ENCODE measurements at regions of chr12 and their contacts with region 1.

Region 1: GRCh38 chr12:52884526-52885293 is 20.2 kb downstream of the KRT8 start:
- DNase-seq: no peak
- H3K4me3 ChIP-seq: no peak overlapping the region
- H3K27ac ChIP-seq: no peak overlapping the region
- H3K27me3 ChIP-seq: no peaks in the 10 kb centered on the region
- CTCF ChIP-seq: peak; percentile 96

Region 2: DNA sequence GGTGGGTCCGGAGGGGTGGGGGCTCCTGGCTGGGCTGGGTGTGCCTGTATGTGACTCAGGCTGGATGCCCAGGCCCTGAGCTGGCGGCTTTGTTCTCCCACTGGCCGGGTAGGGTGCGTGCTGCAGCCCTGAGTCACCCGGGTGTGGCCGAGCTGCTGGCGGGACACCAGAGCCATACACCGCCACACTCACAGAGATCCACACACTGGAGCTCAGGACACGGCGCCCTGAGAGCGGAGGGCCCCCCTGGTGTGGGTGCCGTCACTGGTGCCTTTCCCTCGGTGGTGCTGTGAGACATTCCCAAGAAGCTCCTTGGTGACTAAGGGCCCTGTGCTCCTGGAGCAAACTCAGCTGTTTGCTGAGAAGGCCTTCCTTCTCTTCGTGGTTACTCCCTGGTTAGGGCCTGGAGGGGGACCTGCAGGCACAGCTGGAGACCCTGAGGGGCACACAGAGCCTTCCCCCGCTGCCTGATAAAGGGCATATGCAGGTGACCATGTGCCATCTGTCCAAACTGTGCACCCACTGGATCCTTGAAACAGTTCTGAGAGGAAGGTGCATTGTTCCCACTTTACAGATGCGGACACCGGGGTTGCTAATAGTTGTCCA is 737.2 kb before region 1 on chr12:
- CTCF ChIA-PET with region 1: interaction called, 29 read pairs
- POLR2A ChIA-PET with region 1: no interaction called
- DNase-seq: peak; percentile 96
- H3K4me3 ChIP-seq: no peak overlapping the region
- H3K27ac ChIP-seq: peak overlapping the region; percentile 98
- H3K27me3 ChIP-seq: no peaks in the 10 kb centered on the region
- CTCF ChIP-seq: no peak

Region 3: GRCh38 chr12:52870351-52871290 is 14.1 kb before region 1 on chr12:
- CTCF ChIA-PET with region 1: interaction called, 34 read pairs
- POLR2A ChIA-PET with region 1: no interaction called
- DNase-seq: no peak
- H3K4me3 ChIP-seq: no peak overlapping the region
- H3K27ac ChIP-seq: peak overlapping the region; percentile 75
- H3K27me3 ChIP-seq: no peaks in the 10 kb centered on the region
- CTCF ChIP-seq: peak; percentile 72

Region 4: DNA sequence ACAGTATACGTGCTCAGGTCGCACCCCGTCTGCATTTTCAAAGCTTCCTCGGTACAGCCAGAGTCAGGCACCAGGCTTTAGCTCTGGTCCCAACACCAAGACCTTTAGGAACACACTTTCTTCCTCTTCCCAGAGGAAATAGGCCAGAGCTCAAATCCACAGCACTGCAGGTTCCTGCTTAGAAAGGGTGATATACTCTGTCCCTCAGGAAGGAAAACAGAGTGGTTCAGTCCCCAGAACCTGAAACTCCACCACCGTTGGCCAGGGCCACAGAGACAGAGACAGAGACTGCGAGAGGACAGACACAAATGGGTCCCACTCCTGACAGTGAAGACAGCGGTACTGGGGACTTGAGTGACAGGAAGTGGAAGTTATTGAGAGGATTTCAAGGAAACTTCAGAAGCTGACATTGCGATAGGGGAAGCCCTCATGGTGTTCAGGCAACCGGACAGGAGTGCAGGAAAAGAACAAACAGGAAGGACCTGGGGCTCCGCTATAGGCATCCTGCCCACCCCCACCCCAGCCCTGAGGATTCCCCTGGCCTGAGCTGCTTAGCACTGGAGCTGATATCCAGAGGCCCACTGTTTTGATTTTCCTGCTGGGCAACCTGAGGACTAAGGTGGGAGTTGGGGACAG is 25.7 kb after region 1 on chr12:
- CTCF ChIA-PET with region 1: interaction called, 17 read pairs
- POLR2A ChIA-PET with region 1: no interaction called
- DNase-seq: no peak
- H3K4me3 ChIP-seq: no peak overlapping the region
- H3K27ac ChIP-seq: no peak overlapping the region
- H3K27me3 ChIP-seq: no peaks in the 10 kb centered on the region
- CTCF ChIP-seq: no peak

Region 5: DNA sequence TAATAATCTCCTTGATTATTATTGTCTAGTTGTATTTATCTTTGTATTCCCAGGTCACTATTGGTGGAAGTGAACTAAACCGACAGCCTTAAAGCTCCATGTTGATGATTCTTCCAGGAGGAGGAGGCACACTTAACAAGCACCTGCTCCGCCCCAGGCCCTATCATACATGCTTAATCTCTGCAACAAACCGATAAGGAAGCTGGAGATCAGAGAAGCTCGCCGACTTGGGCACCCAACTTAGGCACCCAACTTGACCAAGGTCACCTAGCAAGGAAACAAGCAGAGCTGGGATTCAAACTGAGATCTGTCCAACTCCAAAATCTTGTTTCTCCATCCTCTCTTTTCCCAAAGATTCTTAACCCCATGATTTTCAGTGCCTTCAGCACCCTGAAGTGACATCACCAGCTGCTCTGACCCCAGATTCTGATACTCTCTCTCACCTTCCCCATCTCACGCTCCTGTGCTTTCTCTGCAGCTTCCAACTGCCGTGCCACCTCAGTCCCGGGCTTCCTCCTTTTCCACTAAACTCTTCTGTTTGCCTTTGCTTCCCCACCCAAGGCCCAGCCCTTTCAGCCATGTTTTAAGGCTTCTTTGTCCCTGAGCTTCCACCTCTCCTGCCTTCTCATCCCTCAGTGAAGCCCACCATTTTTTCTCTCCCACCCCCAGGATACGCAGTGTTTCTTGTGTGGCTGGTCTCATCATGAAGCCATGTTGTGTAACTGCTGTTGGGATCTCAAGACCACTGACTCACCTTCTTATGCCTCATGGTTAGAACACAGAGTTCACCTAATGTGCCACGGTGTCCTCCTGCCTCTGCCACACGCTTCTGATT is 57.6 kb after region 1 on chr12:
- CTCF ChIA-PET with region 1: interaction called, 26 read pairs
- POLR2A ChIA-PET with region 1: interaction called, 4 read pairs
- DNase-seq: no peak
- H3K4me3 ChIP-seq: no peak overlapping the region
- H3K27ac ChIP-seq: no peak overlapping the region
- H3K27me3 ChIP-seq: no peaks in the 10 kb centered on the region
- CTCF ChIP-seq: no peak

Region 6: DNA sequence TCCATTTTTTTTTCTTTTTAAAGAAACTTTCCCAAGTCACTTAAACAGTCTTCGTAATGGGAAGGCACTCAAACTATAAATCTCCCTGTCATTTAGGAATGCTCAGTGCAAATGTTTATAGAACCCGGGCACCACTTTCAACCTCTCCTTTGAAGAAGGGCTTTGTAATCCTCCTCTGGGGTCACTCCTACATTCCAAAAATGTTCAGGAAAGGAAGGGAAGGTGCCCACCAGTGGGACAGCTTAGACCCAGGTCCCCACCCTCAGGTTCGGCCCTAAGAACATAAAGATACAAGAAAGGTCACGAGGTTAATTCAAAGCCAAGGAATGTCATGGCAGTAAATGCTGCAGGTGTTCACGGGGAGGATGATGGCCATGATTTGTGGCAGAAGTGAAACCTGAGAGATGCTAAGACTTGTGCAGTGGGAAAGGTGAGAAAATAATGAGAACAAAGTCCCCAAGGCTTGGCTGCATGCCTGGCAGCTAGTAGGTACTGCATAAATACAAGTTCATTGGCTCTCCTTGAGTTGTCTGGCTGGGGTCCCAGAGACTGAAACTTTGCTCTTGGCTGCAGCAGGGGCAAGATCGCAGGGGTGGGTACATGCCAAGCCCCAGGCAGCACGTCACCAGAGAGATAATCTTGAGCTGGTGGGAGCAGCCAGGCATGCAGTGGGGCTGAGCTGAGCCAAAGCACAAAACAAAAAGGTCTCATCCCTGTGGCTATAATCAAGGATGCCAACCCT is 85.3 kb after region 1 on chr12:
- CTCF ChIA-PET with region 1: interaction called, 44 read pairs
- POLR2A ChIA-PET with region 1: no interaction called
- DNase-seq: no peak
- H3K4me3 ChIP-seq: no peak overlapping the region
- H3K27ac ChIP-seq: no peak overlapping the region
- H3K27me3 ChIP-seq: no peaks in the 10 kb centered on the region
- CTCF ChIP-seq: no peak